ENCODE measurements at regions of chr2 and their contacts with region 1.

Region 1: DNA sequence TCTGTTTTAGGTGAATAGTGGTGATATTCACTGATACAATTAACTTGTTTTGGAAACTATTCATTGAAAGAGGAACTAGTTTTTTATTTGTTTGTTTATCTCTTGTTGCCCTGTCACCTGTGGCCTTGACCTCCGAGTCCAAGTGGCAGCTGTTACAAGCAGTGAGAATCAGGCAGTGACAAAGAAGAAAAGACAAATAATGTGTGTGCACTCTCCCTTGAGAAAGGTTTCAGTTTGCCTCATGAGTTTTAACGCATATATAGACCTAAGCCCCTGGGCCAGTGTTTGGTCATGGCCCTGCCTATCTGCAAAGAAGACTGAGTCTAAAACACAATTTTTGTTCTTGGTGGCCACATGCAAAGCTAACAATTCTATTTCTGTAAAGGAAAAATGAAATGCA is 15.3 kb downstream of the KYNU start:
- DNase-seq: peak; percentile 56
- CTCF ChIP-seq: no peak

Region 2: GRCh38 chr2:142756430-142756829 is 136.3 kb before region 1 on chr2:
- CTCF ChIA-PET with region 1: no interaction called
- POLR2A ChIA-PET with region 1: no interaction called
- DNase-seq: no peak
- CTCF ChIP-seq: no peak

Region 3: DNA sequence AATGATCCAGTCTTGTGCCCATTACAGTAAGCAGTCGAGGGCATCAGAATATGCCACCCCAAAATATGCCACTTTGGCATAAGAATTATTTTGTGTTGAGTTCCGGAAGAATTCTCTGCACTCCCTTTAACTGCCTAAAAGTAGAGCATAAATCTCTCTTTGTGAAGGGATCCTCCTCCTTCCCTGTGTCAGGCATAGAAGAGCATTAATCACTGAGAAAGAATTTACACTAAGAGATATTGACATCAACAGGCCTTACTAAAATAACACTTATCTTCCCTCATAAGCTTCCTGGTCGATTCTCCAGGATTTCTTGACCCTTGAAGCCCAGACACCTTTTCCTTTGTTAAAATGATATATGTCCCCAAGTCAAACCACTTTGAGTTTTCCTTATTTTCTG is 42.9 kb before region 1 on chr2:
- CTCF ChIA-PET with region 1: no interaction called
- POLR2A ChIA-PET with region 1: no interaction called
- DNase-seq: no peak
- CTCF ChIP-seq: no peak

Region 4: DNA sequence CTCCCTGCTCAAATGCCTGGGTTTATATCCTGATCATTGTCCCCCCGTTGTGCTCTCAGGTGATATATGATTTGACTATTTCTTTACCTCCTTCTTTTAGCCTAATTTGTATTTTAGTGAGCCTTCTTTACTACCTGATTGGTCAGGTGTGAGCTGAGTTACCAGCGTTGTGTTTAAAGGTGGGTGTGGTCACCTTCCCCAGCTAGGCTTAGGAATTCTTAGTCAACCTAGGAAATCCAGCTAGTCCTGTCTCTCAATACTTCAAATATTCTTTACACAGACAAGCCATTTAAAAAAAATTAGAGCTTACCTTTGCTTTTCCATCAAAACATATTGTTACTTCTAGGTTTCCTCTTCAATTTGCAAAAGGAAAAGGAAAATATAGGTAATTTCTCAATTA is 14.9 kb after region 1 on chr2:
- CTCF ChIA-PET with region 1: interaction called, 15 read pairs
- POLR2A ChIA-PET with region 1: no interaction called
- DNase-seq: no peak
- CTCF ChIP-seq: no peak